ENCODE measurements at regions of chr6 and their contacts with region 1.

Region 1: DNA sequence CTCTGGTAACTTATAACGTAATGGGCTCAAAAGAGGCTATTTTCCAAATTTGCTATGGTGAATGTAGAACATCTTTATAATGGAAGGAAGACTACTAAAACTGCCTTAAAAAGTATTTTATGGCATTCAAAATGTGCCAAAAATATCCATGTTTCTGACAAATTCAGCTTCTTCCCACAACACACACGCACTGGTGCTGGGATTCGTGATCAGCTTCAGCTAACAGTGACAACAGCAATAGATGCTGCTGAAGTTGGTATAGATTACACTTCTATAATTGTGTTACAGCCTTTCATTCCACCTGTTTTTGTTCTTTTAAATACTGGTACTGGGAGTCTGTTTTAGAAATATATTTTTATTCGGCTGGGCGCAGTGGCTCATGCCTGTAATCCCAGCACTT is 19.0 kb downstream of the NUDT3 start:
- DNase-seq: no peak
- H3K4me3 ChIP-seq: no peak overlapping the region
- H3K27ac ChIP-seq: no peak overlapping the region
- H3K4me1 ChIP-seq: no peaks in the 10 kb centered on the region
- H3K27me3 ChIP-seq: no peaks in the 10 kb centered on the region
- CTCF ChIP-seq: no peak

Region 2: GRCh38 chr6:34295721-34296120 is 77.8 kb before region 1 on chr6:
- CTCF ChIA-PET with region 1: no interaction called
- POLR2A ChIA-PET with region 1: no interaction called
- intact Hi-C with region 1: no loop called
- DNase-seq: no peak
- H3K4me3 ChIP-seq: no peak overlapping the region
- H3K27ac ChIP-seq: no peak overlapping the region
- H3K4me1 ChIP-seq: no peaks in the 10 kb centered on the region
- H3K27me3 ChIP-seq: no peaks in the 10 kb centered on the region
- CTCF ChIP-seq: no peak

Region 3: DNA sequence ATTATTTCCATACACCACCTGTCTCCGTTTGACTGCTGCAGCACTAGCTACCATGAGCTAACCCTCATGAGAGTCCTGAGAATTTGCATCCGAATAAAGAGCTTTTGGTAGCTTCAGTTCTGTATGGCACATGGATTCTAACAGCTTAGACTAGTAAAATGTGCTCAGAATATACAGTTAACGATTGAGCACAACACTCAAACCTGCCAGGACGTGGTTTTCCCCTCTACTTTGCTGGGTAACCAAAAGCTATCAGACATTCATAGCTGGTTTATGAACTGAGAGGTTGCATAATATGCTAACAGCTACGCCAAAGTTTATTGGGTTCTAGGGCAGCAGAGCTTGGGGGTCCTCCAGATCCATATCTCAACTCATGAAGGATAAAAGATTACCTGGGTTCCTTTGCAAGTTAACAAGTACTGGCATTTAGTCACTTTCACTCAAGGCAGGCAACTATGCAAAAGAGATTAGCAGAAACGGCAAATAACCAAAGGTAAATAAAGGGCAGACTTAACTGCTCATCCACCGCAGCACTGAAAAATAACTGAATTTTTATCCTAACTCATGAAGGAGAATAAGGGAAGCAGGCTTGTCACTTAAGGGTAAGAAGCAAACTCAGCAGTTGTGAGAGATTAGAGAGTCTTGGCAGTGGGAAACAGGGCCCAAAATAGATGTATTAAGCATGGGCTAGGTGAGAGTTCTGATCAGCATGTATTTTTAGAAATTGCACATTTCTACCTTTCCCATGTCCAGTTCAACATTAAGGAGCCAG is 10.4 kb before region 1 on chr6:
- CTCF ChIA-PET with region 1: no interaction called
- POLR2A ChIA-PET with region 1: no interaction called
- intact Hi-C with region 1: loop called (anchors 1 kb)
- DNase-seq: no peak
- H3K4me3 ChIP-seq: no peak overlapping the region
- H3K27ac ChIP-seq: peak overlapping the region; percentile 32
- H3K4me1 ChIP-seq: peaks cover 18% of the 10 kb centered on the region
- H3K27me3 ChIP-seq: no peaks in the 10 kb centered on the region
- CTCF ChIP-seq: no peak